Psoas muscle (tissue), 8 donors: ENCODE measurements at regions of chr14 and their contacts with region 1.

Region 1: GRCh38 chr14:21054123-21054767 is 3.4 kb upstream of the RNASE8 start:
- DNase-seq: no peak
- ATAC-seq: no peak
- H3K4me3 ChIP-seq: no peak overlapping the region
- H3K27ac ChIP-seq: no peak overlapping the region
- H3K4me1 ChIP-seq: no peaks in the 10 kb centered on the region
- H3K27me3 ChIP-seq: no peaks in the 10 kb centered on the region
- CTCF ChIP-seq: no peak

Region 2: DNA sequence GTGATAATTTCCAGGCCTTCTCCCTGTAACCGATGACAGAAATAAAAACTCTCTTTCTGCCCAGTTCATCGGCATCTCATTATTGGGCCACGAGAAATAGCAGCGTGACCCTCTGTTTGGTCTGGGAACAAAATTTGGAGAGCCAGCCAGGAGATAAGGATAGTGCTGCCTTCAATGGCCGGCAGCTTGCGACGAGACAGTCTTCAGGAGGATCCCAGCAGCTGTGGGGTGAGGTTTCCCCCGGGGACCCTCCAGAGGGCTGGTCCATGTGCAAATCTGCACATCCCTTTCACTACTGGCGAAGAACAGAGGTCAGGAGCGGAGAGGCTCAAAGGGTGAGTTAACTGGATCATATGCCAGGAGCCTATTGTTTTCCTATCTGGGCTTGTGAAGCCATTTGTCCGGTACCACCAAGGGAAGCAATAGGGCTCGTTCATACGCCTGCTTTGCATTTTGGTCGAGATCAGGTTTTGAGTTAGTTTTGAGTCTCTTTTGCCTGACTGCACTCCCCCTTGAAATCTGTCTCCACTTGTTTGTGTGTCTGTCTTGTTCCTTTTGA is 50.4 kb before region 1 on chr14:
- intact Hi-C with region 1: loop called in 1 of 2 experiments (anchors 5 kb)
- DNase-seq: peak in 1 of 2 donors; percentile 63
- ATAC-seq: peak in 1 of 4 donors; percentile 43
- H3K4me3 ChIP-seq: no peak overlapping the region
- H3K27ac ChIP-seq: no peak overlapping the region
- H3K4me1 ChIP-seq: no peaks in the 10 kb centered on the region
- H3K27me3 ChIP-seq: no peaks in the 10 kb centered on the region
- CTCF ChIP-seq: no peak